GM10248 (cell line): ENCODE measurements at regions of chr14 and their contacts with region 1.

Region 1: DNA sequence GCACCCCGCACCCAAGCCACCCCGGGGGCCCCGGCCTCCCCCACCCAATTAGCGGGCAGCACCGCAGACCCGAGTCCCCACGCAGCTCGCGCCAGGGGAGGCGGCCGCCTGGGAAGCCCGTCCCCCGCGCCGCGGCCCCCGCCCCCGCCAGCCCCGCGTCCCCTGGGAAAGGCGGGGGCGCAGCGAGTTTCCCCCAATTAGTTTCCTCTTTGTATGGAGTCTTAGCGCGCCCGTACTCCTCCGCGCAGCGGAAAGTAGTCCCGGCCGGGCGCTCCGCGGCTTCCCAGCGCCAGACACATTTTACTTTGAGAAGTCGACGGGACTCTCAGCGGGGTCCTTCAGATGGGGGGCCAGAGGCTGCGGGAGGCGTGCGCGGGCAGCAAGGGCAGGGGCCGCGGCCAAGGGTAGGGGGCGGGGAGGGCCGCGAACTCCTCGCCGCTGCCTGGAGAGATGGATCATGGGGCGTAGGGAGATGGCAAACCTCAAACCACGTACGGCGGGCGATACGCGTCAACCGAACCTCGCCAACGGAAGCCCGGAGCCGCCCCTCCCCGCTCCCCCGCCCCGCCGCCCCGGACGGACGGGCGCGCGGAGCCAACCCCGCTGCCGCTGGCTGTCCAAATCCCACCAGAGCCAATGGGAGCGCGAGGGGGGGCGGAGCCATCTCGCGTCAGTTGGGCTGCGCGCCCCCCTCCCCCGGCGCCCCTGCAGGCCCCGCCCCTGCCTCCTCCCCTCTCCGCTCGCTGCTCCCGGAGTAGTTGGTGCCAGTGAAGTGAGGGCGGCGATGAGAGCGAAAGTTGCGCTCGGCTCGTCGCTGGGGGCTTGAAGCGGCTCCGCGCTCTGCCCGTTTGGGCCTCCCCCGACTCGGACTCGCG is at the start of gene RCOR1:
- DNase-seq: peak; percentile 99
- CTCF ChIP-seq: no peak

Region 2: DNA sequence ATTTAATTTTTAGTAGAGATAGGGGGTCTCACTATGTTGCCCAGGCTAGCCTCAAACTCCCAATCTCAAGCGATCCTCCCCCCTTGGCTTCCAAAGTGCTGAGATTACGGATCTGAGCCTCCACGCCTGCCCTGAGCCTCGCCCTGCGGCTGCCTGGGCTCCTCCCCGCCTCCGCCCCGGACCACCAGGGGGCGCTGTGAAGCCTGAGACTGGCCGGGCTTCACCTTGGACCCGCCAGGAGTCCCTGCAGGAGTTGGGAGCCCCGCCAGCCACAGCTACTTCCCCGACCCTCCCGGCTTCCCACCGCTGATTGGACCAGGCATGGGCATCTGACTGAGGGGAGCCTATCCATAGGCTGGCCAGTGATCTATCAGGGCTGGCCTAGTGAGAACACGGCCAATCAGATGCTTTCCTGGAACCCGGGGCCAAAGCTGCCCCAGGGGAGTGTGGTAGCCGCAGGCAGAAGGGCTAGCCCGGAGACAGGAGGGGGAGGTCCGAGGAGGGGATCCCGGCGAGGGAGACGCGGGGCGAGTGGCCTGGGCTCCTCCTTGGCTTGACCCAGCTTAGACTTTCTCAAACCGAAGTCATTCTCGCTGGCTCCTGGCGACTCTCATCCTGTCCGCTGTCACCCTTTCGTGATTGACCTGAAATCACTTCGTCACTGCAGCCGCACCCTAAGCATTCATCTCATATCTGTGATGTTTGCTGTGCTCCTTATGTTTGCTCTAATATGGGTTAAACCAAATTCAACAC is 67.5 kb before region 1 on chr14:
- CTCF ChIA-PET with region 1: interaction called, 15 read pairs
- POLR2A ChIA-PET with region 1: no interaction called
- DNase-seq: peak; percentile 99
- CTCF ChIP-seq: peak; percentile 98

Region 3: DNA sequence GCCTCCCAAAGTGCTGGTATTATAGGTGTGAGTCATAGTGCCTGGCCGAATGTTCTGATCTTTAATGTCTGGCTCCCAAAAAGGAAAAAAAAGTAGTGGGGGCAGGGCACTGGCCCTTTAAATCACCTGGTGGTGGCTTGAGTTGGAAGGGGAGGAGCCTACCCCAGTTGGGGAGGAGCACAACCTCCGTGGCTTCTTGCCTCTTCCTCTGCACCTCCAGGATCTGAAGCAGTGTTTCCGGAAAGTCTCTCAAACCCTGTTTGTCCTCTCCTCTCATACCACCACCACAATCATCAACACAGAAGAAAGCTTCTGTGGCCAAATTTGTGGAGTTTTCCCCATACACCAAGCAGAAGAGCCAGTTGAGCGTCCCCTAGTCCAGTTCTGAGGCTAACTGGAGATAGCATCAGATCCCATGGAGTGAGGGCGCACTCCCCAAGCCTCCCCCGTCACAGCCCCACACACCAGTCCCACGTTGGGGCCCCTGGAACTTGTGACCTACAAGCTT is 24.0 kb before region 1 on chr14:
- CTCF ChIA-PET with region 1: interaction called, 12 read pairs
- POLR2A ChIA-PET with region 1: no interaction called
- DNase-seq: no peak
- CTCF ChIP-seq: no peak

Region 4: DNA sequence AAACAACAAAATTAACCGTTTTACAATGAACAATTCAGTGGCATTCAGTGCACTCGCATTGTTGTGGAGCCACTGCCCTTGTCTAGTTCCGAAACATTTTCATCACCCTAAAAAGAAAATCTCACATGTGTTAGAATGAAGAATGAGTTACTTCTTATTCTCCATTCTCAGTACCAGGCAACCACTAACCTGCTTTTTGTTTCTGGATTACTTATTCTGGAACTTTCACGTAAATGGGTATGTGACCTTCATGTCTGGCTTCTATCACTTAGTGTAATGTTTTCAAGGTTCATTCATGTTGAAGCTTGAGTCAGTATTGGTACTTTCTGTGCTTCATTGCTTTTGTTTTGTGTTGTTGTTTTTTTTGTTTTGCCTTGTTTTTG is 15.9 kb after region 1 on chr14:
- CTCF ChIA-PET with region 1: interaction called, 79 read pairs
- POLR2A ChIA-PET with region 1: interaction called, 4 read pairs
- DNase-seq: peak; percentile 48
- CTCF ChIP-seq: no peak

Region 5: GRCh38 chr14:102616799-102617198 is 24.7 kb after region 1 on chr14:
- CTCF ChIA-PET with region 1: interaction called, 79 read pairs
- POLR2A ChIA-PET with region 1: no interaction called
- DNase-seq: no peak
- CTCF ChIP-seq: no peak

Region 6: DNA sequence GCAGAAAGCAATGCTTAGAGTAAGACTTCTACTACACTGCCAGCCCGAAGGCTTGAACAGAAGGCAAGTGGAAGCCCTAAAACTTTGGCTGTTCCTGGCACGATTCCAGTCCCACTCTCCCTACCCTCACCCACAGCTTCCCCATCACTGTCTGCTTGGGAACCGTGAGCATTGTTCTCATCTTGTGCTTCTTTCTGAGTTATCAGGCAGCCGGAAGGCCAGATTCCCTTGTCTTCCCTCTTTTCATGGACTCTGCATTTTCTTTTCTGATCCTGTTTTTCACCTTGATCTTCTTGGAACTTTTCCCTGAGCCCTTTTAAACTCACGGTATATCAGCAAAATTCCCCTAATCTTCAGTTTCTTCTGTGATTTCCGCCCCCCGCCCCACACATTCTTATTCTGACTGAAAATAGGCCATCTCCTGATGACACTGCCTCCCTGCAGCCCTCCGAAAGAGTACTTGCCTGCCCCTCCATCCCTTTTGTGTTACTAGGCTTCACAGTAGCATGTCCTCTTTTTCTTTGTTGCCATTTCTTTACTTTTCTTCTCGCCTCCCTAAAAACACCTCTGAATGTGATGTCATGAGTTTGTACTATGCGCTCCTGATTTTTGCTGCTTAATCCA is 30.2 kb after region 1 on chr14:
- CTCF ChIA-PET with region 1: interaction called, 16 read pairs
- POLR2A ChIA-PET with region 1: no interaction called
- DNase-seq: no peak
- CTCF ChIP-seq: no peak

Region 7: DNA sequence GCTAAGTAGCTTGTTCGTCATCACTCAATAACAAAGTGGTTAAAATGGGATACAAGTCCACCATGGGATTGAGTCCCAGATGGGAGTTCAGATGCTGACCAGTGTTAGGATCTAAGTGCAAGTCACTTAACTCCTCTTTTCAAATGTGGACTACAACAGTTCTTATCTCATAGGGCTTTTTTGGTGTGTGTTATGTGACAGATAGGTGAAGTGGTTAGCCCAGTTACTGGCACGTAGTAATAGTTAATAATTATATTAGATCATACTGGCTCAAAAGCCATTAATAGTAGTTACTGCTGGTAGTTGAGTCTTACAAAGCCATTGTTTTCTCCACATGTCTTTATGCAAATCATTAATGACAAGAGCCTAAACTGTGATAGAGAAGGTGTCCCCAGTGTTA is 73.5 kb after region 1 on chr14:
- CTCF ChIA-PET with region 1: no interaction called
- POLR2A ChIA-PET with region 1: no interaction called
- DNase-seq: no peak
- CTCF ChIP-seq: no peak